A673 (cell line): ENCODE measurements at regions of chr16 and their contacts with region 1.

Region 1: GRCh38 chr16:67159593-67160406 is at the starts of genes FBXL8 and TRADD:
- DNase-seq: peak; percentile 75
- H3K4me3 ChIP-seq: peak within 1 kb of the TSS; percentile 88
- H3K27ac ChIP-seq: peak within 1 kb of the TSS; percentile 60
- H3K4me1 ChIP-seq: peaks cover 7% of the 10 kb centered on the region
- H3K27me3 ChIP-seq: no peaks in the 10 kb centered on the region
- CTCF ChIP-seq: peak; percentile 73
- total RNA-seq, gene FBXL8: 8.3 and 13.8 TPM in 2 replicates
- total RNA-seq, gene TRADD: 7.7 and 10.8 TPM in 2 replicates

Region 2: GRCh38 chr16:66894948-66895688 is 264.7 kb before region 1 on chr16:
- CTCF ChIA-PET with region 1: interaction called, 4 read pairs
- POLR2A ChIA-PET with region 1: no interaction called
- intact Hi-C with region 1: loop called (anchors 10 kb)
- DNase-seq: peak; percentile 76
- H3K4me3 ChIP-seq: no peak overlapping the region
- H3K27ac ChIP-seq: no peak overlapping the region
- H3K4me1 ChIP-seq: peaks cover 8% of the 10 kb centered on the region
- H3K27me3 ChIP-seq: no peaks in the 10 kb centered on the region
- CTCF ChIP-seq: peak; percentile 87

Region 3: GRCh38 chr16:66961065-66961744 is 198.6 kb before region 1 on chr16 and contains the start of gene CES3:
- CTCF ChIA-PET with region 1: interaction called, 10 read pairs
- POLR2A ChIA-PET with region 1: interaction called, 3 read pairs
- intact Hi-C with region 1: loop called (anchors 5 kb)
- DNase-seq: peak; percentile 88
- H3K4me3 ChIP-seq: peak within 1 kb of the TSS; percentile 30
- H3K27ac ChIP-seq: no peak within 1 kb of the TSS
- H3K4me1 ChIP-seq: peaks cover 4% of the 10 kb centered on the region
- H3K27me3 ChIP-seq: no peaks in the 10 kb centered on the region
- CTCF ChIP-seq: peak; percentile 99
- total RNA-seq, gene CES3: 3.0 and 3.9 TPM in 2 replicates

Region 4: DNA sequence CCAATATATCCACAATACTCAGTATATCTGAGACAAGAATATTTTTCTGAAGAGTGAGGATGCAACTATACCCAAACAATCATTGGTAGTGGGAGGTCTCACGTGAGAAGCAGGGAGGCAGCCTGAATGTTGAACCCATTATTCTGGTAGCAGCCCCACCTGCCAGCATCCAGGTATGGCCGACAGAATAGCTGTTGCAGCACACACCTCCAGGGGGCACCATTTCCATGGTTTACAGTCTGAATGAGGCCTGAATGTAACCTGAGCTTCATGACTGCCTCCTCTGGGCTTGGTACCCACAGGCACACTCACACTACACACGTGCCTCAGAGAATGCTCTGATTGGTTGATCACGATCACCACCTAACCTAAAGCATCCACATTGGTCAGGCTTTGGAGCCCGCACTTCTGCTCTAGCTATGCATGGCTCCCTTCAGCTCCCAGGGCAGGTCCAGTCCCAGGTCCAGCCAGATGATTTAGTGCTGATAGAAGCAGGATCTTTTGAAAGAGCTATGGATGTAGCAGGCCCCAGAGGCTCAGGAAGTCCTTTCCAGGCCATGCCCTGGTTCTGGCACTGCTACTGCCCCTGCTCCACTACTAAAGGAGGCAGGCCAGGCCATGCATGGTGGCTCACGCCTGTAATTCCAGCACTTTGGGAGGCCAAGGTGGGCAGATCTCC is 141.9 kb before region 1 on chr16:
- CTCF ChIA-PET with region 1: interaction called, 39 read pairs
- POLR2A ChIA-PET with region 1: no interaction called
- intact Hi-C with region 1: no loop called
- DNase-seq: peak; percentile 96
- H3K4me3 ChIP-seq: no peak overlapping the region
- H3K27ac ChIP-seq: no peak overlapping the region
- H3K4me1 ChIP-seq: peaks cover 18% of the 10 kb centered on the region
- H3K27me3 ChIP-seq: no peaks in the 10 kb centered on the region
- CTCF ChIP-seq: peak; percentile 96

Region 5: GRCh38 chr16:67226804-67227557 is 67.2 kb after region 1 on chr16 and contains the start of gene TMEM208:
- CTCF ChIA-PET with region 1: no interaction called
- POLR2A ChIA-PET with region 1: no interaction called
- intact Hi-C with region 1: loop called (anchors 2 kb)
- DNase-seq: peak; percentile 99
- H3K4me3 ChIP-seq: peak within 1 kb of the TSS; percentile 89
- H3K27ac ChIP-seq: peak within 1 kb of the TSS; percentile 60
- H3K4me1 ChIP-seq: peaks cover 17% of the 10 kb centered on the region
- H3K27me3 ChIP-seq: no peaks in the 10 kb centered on the region
- CTCF ChIP-seq: peak; percentile 30; the same call in 1 of the 2 replicates
- total RNA-seq, gene TMEM208: 30.4 and 38.2 TPM in 2 replicates